ENCODE measurements at regions of chr1 and their contacts with region 1.

Region 1: GRCh38 chr1:45303582-45304310 is 22.9 kb upstream of the HPDL start:
- DNase-seq: peak; percentile 97
- H3K4me3 Mint-ChIP-seq: peak overlapping the region; percentile 79
- H3K27ac Mint-ChIP-seq: peak overlapping the region; percentile 91
- H3K4me1 Mint-ChIP-seq: peaks cover 40% of the 10 kb centered on the region
- H3K27me3 Mint-ChIP-seq: no peaks in the 10 kb centered on the region

Region 2: GRCh38 chr1:45011837-45012638 is 291.7 kb before region 1 on chr1 and contains the start of gene UROD:
- CTCF ChIA-PET with region 1: interaction called, 86 read pairs
- POLR2A ChIA-PET with region 1: interaction called, 8 read pairs
- DNase-seq: peak; percentile 94
- H3K4me3 Mint-ChIP-seq: peak within 1 kb of the TSS; percentile 79
- H3K27ac Mint-ChIP-seq: peak within 1 kb of the TSS; percentile 92
- H3K4me1 Mint-ChIP-seq: peaks cover 43% of the 10 kb centered on the region
- H3K27me3 Mint-ChIP-seq: no peaks in the 10 kb centered on the region
- total RNA-seq, gene UROD: 66.4 to 70.7 TPM

Region 3: GRCh38 chr1:45018599-45019230 is 285.0 kb before region 1 on chr1:
- CTCF ChIA-PET with region 1: interaction called, 86 read pairs
- POLR2A ChIA-PET with region 1: no interaction called
- DNase-seq: peak; percentile 72
- H3K4me3 Mint-ChIP-seq: no peak overlapping the region
- H3K27ac Mint-ChIP-seq: no peak overlapping the region
- H3K4me1 Mint-ChIP-seq: peaks cover 11% of the 10 kb centered on the region
- H3K27me3 Mint-ChIP-seq: no peaks in the 10 kb centered on the region

Region 4: DNA sequence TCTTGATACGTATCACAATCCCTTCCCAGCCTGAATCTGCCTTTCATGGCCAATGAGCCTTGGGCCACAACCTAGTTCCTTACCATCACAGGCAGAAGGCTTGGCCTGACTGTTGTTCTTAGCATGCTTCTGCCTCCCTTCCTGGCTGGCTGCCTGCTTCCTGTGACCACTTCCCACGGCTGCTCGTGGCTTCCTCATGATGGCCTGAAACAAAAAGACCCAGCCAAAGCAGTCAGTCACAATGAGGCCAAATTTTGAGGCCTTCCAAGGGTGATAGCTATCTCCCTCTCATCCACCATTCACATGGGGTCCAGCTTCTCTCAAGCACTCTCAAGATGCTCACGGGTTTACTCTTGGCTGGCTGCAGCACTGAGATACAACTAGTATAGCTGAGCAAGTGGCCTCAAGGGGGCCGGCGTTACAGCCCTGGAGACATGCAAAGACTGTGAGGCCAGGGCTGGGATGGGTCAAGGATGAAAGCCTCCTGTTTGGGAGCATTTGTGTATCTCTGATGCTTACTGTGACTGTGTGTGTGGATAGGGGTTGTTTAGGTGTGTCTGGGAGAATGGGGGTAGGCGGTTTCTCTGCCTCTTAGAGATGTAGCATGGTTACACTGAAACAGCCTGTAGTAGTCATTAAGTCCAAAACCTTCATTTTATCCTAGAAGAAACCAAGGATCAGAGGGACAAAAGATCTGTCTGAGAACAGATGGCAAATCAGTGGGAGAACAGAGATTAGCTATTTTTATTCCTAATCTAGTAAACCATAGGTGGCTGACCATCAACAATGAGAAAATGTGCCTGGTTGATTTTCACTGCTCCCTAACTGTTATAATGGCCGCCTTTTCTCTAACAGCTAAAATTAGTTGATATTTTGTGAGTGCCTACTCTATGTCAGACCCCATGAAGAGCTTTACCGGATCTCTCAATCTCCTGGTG is 30.8 kb after region 1 on chr1:
- CTCF ChIA-PET with region 1: interaction called, 11 read pairs
- POLR2A ChIA-PET with region 1: interaction called, 15 read pairs
- DNase-seq: peak; percentile 21
- H3K4me3 Mint-ChIP-seq: no peak overlapping the region
- H3K27ac Mint-ChIP-seq: peak overlapping the region; percentile 79
- H3K4me1 Mint-ChIP-seq: peaks cover 49% of the 10 kb centered on the region
- H3K27me3 Mint-ChIP-seq: no peaks in the 10 kb centered on the region

Region 5: DNA sequence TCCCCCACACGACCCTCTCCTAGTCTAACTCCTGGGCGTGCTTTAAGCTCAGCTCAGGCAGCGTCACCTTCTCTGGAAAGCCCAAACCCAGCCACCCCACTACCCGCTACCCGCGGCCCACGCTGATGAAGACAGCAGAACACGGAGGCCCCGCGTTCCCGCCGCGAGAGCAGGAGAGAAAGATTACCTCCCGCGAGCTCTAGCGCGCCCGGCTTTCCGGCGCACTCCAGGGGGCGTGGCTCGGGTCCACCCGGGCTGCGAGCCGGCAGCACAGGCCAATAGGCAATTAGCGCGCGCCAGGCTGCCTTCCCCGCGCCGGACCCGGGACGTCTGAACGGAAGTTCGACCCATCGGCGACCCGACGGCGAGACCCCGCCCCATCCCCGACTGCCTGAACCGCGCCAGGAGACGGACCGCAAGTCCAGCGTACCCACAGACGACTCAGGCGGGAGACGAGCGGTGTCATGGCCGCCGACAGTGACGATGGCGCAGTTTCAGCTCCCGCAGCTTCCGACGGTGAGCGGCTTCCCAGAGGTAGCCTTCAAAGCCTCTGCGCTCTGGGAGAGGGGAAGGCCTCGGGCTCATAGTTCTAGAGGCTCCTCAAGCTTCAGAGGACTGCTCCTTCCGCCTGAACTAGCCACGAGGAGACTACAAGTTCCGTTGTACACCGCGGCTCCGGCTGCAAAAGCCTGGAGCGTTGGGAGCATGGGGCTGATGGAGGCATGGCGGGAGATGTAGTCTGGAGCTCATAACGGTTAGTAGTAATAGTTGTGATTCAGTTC is 36.2 kb after region 1 on chr1 and contains the starts of genes MUTYH and TOE1:
- CTCF ChIA-PET with region 1: interaction called, 11 read pairs
- POLR2A ChIA-PET with region 1: interaction called, 15 read pairs
- DNase-seq: peak; percentile 95
- H3K4me3 Mint-ChIP-seq: peak within 1 kb of the TSS; percentile 97
- H3K27ac Mint-ChIP-seq: peak within 1 kb of the TSS; percentile 98
- H3K4me1 Mint-ChIP-seq: peaks cover 55% of the 10 kb centered on the region
- H3K27me3 Mint-ChIP-seq: no peaks in the 10 kb centered on the region
- total RNA-seq, gene MUTYH: 51.7 to 55.1 TPM
- total RNA-seq, gene TOE1: 22.6 to 34.4 TPM

Measured in activated CD4-positive, alpha-beta T cell treated with anti-CD3 and anti-CD28 coated beads, Interleukin-2, amount 10 ng/mL, durations not matched to agents 7 days and 5 days (primary cell).